ENCODE measurements at regions of chr11 and their contacts with region 1.

Region 1: DNA sequence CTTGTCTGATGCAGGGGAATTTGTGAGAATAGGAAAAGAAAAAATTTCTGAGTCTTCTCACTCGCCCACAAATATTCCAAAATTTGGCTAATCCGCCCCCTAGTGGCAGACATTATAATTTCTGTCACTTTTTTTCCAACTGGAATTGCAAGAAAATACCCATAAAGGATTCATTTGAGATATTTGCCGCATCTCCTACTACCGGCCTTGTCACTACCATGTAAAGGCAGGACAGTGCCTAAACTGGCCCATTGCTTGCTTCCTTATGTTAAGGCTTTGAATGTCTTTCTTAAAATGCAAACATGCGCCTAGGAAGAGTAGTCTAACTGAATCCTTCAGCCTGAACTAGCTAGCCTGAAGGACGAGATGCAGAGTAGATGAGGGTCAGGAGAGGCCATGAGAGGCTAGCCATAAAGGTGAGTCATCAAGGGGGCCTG is 9.3 kb upstream of the CEP295 start:
- DNase-seq: peak in 1 of 2 experiments; percentile 84
- H3K4me3 ChIP-seq: no peak overlapping the region
- H3K4me3 Mint-ChIP-seq: no peak overlapping the region
- H3K27ac Mint-ChIP-seq: no peak overlapping the region
- H3K4me1 ChIP-seq: peaks cover 13% of the 10 kb centered on the region
- H3K4me1 Mint-ChIP-seq: peaks cover 24% of the 10 kb centered on the region
- H3K27me3 ChIP-seq: no peaks in the 10 kb centered on the region; the same call in 1 of the 2 replicates
- H3K27me3 Mint-ChIP-seq: peaks cover 16% of the 10 kb centered on the region
- CTCF ChIP-seq: peak; percentile 83

Region 2: GRCh38 chr11:92917927-92918326 is 734.3 kb before region 1 on chr11:
- CTCF ChIA-PET with region 1: no interaction called
- POLR2A ChIA-PET with region 1: no interaction called
- intact Hi-C with region 1: no loop called
- DNase-seq: no peak
- H3K4me3 ChIP-seq: no peak overlapping the region
- H3K4me3 Mint-ChIP-seq: no peak overlapping the region
- H3K27ac Mint-ChIP-seq: no peak overlapping the region
- H3K4me1 ChIP-seq: no peaks in the 10 kb centered on the region
- H3K4me1 Mint-ChIP-seq: no peaks in the 10 kb centered on the region
- H3K27me3 ChIP-seq: no peaks in the 10 kb centered on the region
- H3K27me3 Mint-ChIP-seq: peaks cover 4% of the 10 kb centered on the region
- CTCF ChIP-seq: no peak

Region 3: DNA sequence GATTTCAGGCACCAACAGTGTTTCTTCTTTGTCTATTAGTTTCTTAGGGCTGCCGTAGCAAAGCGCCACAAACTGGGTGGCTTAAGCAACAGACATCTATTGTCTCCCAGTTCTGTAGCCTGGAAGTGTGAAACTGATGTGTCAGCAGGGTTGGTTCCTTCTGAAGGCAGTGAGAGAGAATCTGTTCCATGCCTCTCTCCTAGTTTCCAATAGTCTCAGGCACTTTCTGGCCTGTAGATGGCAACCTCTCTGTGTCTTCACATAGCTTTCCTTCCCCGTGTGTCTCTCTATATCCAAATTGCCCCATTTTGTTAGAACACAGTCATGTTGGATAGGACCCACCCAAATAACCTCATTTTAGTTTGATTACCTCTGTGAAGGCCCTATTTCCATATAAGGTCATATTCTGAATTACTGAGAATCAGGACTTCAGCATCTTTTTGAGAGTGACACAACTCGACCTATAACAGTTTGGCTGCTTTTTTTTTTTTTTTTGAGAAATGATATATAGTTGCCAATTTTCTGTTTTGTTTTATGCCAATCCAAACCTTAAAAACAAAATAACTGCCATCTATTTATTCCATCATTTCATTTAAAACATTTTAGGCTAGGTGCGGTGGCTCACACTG is 562.6 kb before region 1 on chr11:
- CTCF ChIA-PET with region 1: no interaction called
- POLR2A ChIA-PET with region 1: no interaction called
- intact Hi-C with region 1: loop called (anchors 5 kb)
- DNase-seq: peak; percentile 47 to 52
- H3K4me3 ChIP-seq: no peak overlapping the region
- H3K4me3 Mint-ChIP-seq: no peak overlapping the region
- H3K27ac Mint-ChIP-seq: no peak overlapping the region
- H3K4me1 ChIP-seq: no peaks in the 10 kb centered on the region
- H3K4me1 Mint-ChIP-seq: no peaks in the 10 kb centered on the region
- H3K27me3 ChIP-seq: no peaks in the 10 kb centered on the region
- H3K27me3 Mint-ChIP-seq: peaks cover 6% of the 10 kb centered on the region
- CTCF ChIP-seq: peak; percentile 65 to 88

Region 4: DNA sequence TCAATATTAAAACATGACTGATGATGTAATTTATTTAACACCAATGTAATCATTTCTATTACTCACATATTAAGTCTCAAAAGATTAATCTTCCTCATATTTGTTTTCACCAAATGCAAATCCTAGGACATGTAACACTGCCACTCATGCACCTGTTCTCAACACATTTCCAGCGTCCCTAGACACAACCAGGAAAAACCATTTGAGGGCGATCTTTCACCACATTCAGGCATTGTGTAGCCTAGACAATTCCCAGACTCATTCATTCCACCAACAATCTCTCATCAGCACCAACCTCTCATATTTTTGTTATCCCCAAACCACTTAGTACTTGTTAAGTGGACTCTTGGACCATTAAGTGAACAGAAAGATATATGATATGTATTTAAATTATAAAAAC is 520.5 kb before region 1 on chr11:
- CTCF ChIA-PET with region 1: no interaction called
- POLR2A ChIA-PET with region 1: no interaction called
- intact Hi-C with region 1: loop called (anchors 5 kb)
- DNase-seq: peak in 1 of 2 experiments; percentile 41
- H3K4me3 ChIP-seq: no peak overlapping the region
- H3K4me3 Mint-ChIP-seq: no peak overlapping the region
- H3K27ac Mint-ChIP-seq: no peak overlapping the region
- H3K4me1 ChIP-seq: no peaks in the 10 kb centered on the region
- H3K4me1 Mint-ChIP-seq: no peaks in the 10 kb centered on the region
- H3K27me3 ChIP-seq: no peaks in the 10 kb centered on the region
- H3K27me3 Mint-ChIP-seq: peaks cover 23% of the 10 kb centered on the region
- CTCF ChIP-seq: peak in 1 of 2 experiments; percentile 38

Region 5: DNA sequence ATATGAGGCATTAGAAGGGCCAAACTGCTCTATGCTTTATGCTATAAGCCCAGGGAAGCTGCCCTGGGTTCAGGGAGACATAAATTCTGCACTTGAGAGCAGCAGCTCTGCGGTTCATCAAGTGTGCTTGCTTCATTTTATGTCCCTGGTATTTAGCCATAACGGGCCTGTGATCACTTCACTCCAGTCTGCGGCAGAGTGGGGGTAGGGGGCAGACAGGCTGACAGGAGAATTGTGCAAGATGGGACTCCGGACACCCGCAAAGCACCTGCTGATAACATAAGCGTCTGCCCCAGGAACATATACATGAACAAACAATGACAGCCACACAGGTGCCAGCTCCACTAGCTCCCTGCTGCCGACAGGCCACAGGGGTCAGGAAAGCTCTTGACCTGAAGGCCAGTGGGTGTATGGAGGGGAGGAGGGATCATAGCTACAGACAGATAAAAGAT is 165.1 kb before region 1 on chr11:
- CTCF ChIA-PET with region 1: no interaction called
- POLR2A ChIA-PET with region 1: no interaction called
- intact Hi-C with region 1: loop called (anchors 2 kb)
- DNase-seq: peak; percentile 80 to 86
- H3K4me3 ChIP-seq: no peak overlapping the region
- H3K4me3 Mint-ChIP-seq: no peak overlapping the region
- H3K27ac Mint-ChIP-seq: no peak overlapping the region
- H3K4me1 ChIP-seq: peaks cover 14% of the 10 kb centered on the region
- H3K4me1 Mint-ChIP-seq: peaks cover 11% of the 10 kb centered on the region
- H3K27me3 ChIP-seq: no peaks in the 10 kb centered on the region
- H3K27me3 Mint-ChIP-seq: no peaks in the 10 kb centered on the region
- CTCF ChIP-seq: no peak

Measured in Caco-2 (cell line).